ENCODE measurements at regions of chr1 and their contacts with region 1.

Region 1: DNA sequence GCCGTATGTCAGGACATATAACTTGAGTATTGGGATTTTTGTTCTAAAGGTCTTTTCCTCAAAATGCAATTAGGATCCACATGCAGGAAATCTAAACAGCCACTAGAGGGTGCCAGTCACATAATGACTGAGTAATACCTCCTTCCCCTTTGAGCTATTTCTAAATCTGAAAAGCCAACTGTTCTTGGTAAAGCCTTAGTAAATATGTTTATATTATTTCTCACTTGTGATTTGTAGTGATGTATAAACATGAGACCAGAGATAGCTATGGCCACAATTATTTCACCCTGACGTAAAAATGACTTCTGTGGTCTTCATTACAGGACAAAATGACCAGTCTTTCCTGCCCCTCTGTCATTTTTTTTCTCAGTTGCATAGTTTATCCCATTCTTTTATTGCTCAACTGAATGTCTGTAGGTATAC is 41.0 kb upstream of the DR1 start:
- DNase-seq: peak; percentile 54
- H3K4me3 ChIP-seq: no peak overlapping the region
- H3K27ac ChIP-seq: no peak overlapping the region
- H3K4me1 ChIP-seq: no peaks in the 10 kb centered on the region
- H3K27me3 ChIP-seq: no peaks in the 10 kb centered on the region
- CTCF ChIP-seq: peak; percentile 63 to 66
- POLR2A ChIP-seq: no peak

Region 2: GRCh38 chr1:92980732-92981647 is 323.7 kb before region 1 on chr1:
- CTCF ChIA-PET with region 1: no interaction called
- POLR2A ChIA-PET with region 1: no interaction called
- dilution Hi-C with region 1: no loop called
- intact Hi-C with region 1: no loop called
- DNase-seq: no peak
- H3K4me3 ChIP-seq: no peak overlapping the region
- H3K27ac ChIP-seq: no peak overlapping the region
- H3K4me1 ChIP-seq: no peaks in the 10 kb centered on the region
- H3K27me3 ChIP-seq: no peaks in the 10 kb centered on the region
- CTCF ChIP-seq: no peak
- POLR2A ChIP-seq: no peak

Region 3: DNA sequence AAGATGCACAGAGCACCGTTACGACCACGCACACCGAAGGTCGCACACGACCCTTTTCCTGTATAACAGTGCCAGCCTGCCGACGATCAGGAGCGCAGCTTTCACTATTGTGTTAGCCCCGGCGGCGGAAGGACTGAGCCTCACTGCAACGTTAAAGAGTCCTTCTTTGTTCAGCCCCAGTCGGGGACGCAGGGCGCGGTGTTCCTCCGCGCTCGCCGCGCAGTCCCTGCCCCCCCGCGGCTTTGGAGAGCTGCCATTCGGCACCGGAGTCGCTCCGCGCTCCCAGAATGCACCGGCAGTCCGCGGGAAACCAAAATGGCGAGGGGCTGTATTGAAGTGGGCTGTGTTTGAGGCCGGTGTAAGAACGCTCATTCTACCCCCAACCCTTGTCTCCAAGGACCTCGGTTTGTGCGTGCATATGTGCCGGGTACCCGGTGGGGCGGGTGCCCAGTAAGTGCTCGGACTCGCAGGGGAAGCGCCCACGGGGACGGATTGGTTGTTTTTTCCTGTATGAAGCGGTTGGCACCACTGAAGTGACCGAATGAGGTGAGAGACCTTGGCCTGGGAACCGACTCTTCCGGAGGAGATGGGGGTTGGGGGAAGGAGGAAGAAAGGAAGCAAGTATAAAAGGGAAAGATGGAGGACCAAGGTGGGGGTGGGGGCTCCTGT is 225.6 kb before region 1 on chr1 and contains the start of gene MTF2:
- CTCF ChIA-PET with region 1: interaction called, 30 read pairs
- POLR2A ChIA-PET with region 1: no interaction called
- dilution Hi-C with region 1: no loop called
- intact Hi-C with region 1: loop called (anchors 1 kb)
- DNase-seq: peak; percentile 97
- H3K4me3 ChIP-seq: peak within 1 kb of the TSS; percentile 81 to 90 (median 89)
- H3K27ac ChIP-seq: peak within 1 kb of the TSS; percentile 87
- H3K4me1 ChIP-seq: peaks cover 23% of the 10 kb centered on the region
- H3K27me3 ChIP-seq: no peaks in the 10 kb centered on the region
- CTCF ChIP-seq: no peak
- POLR2A ChIP-seq: peak; percentile 98
- total RNA-seq, gene MTF2: 40.5 and 42.6 TPM in 2 replicates

Region 4: DNA sequence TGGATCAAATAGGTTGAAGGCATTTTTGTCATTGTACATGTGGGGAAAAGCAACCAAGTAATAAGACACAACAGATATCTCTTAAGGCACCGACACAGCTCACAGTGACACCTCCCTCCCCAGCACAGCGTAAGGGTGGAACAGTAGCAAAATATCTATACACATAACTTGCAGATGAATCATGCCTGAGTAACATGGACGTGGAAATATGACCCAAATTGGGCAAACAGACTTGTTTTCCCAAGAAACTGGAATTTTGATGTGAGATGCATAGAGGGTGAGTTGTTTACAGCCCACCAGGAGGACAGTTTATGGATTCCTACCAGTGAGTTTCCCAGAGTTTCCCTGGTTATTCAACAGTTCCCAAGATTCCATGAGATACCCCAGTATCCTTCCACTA is 33.7 kb after region 1 on chr1:
- CTCF ChIA-PET with region 1: interaction called, 18 read pairs
- POLR2A ChIA-PET with region 1: no interaction called
- dilution Hi-C with region 1: no loop called
- intact Hi-C with region 1: no loop called
- DNase-seq: peak; percentile 66
- H3K4me3 ChIP-seq: no peak overlapping the region
- H3K27ac ChIP-seq: peak overlapping the region; percentile 64
- H3K4me1 ChIP-seq: peaks cover 34% of the 10 kb centered on the region
- H3K27me3 ChIP-seq: no peaks in the 10 kb centered on the region
- CTCF ChIP-seq: no peak
- POLR2A ChIP-seq: peak; percentile 49

Region 5: DNA sequence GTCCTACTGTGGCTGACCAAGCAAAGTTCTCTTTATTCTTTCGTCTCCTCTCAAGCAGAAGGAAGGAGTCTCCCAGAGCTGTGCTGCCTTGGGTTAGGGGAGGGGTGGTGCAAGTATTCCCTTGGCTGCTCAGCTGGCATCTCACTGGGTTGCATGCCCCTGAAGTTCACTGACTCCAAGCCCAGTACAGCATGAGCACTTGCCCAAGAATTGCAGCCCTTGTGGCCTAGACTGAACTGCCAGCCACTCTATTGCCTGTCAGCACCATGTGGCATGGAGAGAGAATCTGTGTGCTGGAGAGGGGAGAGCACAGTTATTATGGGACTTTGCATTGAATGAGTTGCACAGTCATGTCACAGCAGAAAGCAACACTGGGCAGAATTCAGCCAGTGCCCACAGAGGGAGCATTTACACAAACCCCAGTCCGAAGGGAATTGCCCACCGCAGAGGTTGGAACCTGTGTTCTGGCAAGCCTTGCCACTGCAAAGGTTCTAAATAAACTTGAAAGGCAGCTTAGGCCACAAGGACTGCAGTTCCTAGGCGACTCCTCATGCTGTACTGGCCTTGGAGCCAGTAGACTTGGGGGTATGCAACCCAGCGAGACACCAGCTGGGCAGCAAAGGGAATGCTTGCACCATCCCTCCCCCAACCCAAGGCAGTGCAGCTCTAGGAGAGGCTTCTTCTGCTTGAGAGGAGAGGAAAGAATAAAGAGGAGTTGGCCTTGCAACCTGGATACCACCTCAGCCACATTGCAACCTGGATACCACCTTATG is 69.8 kb after region 1 on chr1:
- CTCF ChIA-PET with region 1: interaction called, 13 read pairs
- POLR2A ChIA-PET with region 1: no interaction called
- dilution Hi-C with region 1: no loop called
- intact Hi-C with region 1: no loop called
- DNase-seq: no peak
- H3K4me3 ChIP-seq: no peak overlapping the region
- H3K27ac ChIP-seq: no peak overlapping the region
- H3K4me1 ChIP-seq: no peaks in the 10 kb centered on the region
- H3K27me3 ChIP-seq: no peaks in the 10 kb centered on the region
- CTCF ChIP-seq: no peak
- POLR2A ChIP-seq: no peak

Region 6: DNA sequence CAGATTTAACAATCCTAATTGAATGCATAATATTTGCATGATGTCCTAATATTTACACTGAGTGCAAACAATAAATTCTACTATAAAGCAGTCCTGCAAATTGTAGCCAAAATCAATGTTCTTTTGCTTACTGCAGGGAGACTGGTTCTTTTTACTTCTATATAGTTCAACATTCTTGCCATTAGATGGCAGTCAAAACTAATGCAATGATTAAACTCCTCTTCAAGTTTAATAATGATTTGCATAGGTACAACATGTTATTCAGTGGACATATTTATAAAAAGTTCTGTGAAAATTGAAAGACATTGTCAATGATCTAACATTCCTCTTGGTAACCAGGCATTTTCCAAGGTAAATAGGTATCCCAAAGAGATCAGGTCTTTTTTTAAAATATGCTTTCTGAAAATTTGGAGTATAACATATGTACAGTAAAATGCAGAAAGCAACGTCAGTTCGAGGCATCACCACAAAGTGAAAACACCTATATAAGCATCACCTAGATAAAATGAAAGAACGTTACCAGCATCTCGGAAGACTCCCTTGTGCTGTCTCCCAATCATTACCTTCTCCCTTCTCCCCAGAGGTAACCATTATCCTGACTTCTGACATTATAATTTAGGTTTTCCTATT is 133.4 kb after region 1 on chr1:
- CTCF ChIA-PET with region 1: interaction called, 93 read pairs
- POLR2A ChIA-PET with region 1: no interaction called
- dilution Hi-C with region 1: no loop called
- intact Hi-C with region 1: loop called (anchors 2 kb)
- DNase-seq: peak; percentile 69
- H3K4me3 ChIP-seq: no peak overlapping the region
- H3K27ac ChIP-seq: no peak overlapping the region
- H3K4me1 ChIP-seq: no peaks in the 10 kb centered on the region
- H3K27me3 ChIP-seq: peaks cover 0 to 12% of the 10 kb centered on the region in 2 experiments
- CTCF ChIP-seq: peak; percentile 26 to 29
- POLR2A ChIP-seq: no peak

Region 7: DNA sequence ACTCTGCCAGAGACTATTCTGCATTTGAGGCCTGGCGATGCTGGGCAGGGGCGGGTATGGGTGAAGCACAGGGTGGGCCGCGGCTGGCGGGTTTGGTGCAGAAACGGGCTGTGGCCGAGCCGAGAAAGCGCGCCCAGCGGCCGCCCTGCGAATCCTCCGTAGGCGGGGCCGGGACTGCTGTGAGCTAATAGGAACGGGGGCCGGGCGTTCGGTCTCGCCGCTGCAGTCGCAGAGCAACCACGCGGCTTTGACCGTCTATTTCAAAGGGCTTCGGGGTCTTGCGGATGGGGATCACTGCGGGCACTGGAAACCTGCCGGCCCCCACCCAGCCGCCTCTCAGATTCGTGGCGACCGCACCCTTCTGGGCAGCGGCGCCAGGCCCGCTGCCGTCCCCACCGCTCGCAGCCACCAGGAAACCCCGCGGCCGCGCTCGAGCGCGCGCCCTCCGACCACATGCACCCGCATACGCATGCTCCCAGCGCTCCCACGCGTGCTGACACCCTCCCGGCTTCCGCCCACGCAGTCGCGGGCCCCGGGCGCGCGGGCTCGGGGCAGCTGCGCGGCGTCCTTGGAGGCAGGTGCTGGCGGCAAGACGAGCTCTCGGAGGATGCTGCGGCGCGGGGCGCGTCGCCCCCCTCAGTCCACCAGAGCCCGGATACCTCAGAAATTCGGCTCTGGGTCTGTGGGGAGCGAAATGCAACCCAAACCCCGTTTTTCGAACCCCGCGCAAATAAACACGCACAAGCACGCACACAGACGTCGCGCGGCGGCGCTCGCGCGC is 541.7 kb after region 1 on chr1:
- CTCF ChIA-PET with region 1: interaction called, 22 read pairs
- POLR2A ChIA-PET with region 1: no interaction called
- dilution Hi-C with region 1: no loop called
- intact Hi-C with region 1: loop called (anchors 2 kb)
- DNase-seq: peak; percentile 83
- H3K4me3 ChIP-seq: peak overlapping the region; percentile 65 to 90 (median 67)
- H3K27ac ChIP-seq: peak overlapping the region; percentile 99
- H3K4me1 ChIP-seq: peaks cover 25% of the 10 kb centered on the region
- H3K27me3 ChIP-seq: no peaks in the 10 kb centered on the region
- CTCF ChIP-seq: peak; percentile 27 to 53
- POLR2A ChIP-seq: peak; percentile 72

Measured in endothelial cell of umbilical vein (primary cell).